ENCODE measurements at regions of chr19 and their contacts with region 1.

Region 1: DNA sequence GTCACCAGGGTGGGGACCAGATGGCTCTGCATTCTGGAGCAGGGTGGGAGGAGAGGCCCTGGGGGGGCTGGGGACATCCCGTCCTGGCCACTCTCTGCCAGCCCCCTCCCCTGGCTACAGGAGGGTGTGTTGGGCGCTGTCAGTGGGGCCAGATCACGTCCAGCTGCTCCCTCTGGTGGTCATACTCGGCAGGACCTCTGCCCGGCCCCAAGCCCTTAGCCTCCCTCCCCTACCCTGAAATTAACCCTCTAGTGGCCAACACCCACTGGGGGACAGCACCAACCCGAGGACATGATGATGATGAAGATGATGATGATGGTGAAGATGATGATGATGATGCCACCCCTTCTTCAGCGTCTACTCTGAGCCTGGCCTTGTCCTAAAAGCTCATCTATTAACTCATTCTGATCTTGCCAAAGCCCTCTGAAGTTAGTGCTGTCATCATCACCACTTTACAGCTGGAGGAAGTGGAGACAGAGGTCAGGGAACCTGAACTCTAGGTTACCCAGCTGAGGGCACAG is 590 bp upstream of the LGI4 start:
- DNase-seq: peak; percentile 81 to 99
- ATAC-seq: peak; percentile 64 to 91
- H3K4me3 ChIP-seq: no peak overlapping the region
- H3K27ac ChIP-seq: no peak overlapping the region
- H3K4me1 ChIP-seq: peaks cover 5% of the 10 kb centered on the region; the same call in 1 of the 3 replicates
- CTCF ChIP-seq: peak; percentile 95
- EP300 ChIP-seq: no peak
- POLR2A ChIP-seq: no peak
- RAD21 ChIP-seq: peak; percentile 76 to 86

Region 2: GRCh38 chr19:34639491-34640085 is 495.9 kb before region 1 on chr19:
- CTCF ChIA-PET with region 1: interaction called, 11 read pairs
- POLR2A ChIA-PET with region 1: no interaction called
- DNase-seq: peak; percentile 36 to 88
- ATAC-seq: peak; percentile 74 to 93; a peak in 5 of 6 replicates
- H3K4me3 ChIP-seq: no peak overlapping the region
- H3K27ac ChIP-seq: no peak overlapping the region
- H3K4me1 ChIP-seq: no peaks in the 10 kb centered on the region
- CTCF ChIP-seq: peak; percentile 93
- EP300 ChIP-seq: no peak
- POLR2A ChIP-seq: no peak
- RAD21 ChIP-seq: peak; percentile 87 to 95

Region 3: DNA sequence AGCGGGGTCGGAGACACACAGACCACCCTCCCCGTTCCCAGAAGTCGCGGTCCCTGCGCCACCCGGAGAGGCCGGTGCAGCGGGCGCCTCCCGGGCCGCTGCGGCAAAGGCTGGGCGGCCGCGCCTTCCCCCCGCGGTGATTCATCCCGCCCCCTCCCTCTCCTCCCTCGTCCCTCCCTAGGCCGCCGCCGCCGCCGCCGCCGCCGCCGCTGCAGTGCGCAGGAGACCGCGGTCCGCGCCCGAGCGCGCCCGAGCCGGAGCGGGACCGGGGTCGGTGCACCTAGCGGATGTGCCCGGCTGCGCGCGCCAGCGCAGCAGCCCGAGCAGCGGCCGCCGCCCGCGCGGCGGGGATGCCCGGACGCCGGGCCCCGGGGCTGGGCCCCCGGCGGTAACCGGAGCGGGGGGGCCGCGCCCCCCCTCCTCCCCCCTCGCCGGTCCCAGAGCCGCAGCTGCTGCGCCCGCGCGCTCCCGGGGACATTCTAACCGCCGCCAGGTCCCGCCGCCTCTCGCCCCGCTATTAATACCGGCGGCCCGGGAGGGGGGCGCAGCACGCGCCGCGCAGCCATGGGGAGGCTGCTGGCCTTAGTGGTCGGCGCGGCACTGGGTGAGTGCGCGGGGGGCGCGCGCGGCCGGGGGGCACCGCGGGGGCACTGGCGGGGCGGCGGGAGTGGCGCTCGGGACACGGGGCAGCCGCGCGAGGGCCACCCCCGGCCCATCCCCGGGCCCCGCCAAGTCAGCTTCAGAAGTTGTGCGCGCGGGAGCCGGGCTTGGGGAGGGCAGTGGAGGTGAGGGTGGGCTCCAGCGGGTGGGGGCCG is 105.0 kb before region 1 on chr19 and contains the start of gene SCN1B:
- CTCF ChIA-PET with region 1: interaction called, 11 read pairs
- POLR2A ChIA-PET with region 1: no interaction called
- DNase-seq: peak; percentile 85 to 91
- ATAC-seq: peak; percentile 54 to 82
- H3K4me3 ChIP-seq: peak within 1 kb of the TSS; percentile 73
- H3K27ac ChIP-seq: peak within 1 kb of the TSS; percentile 77 to 91
- H3K4me1 ChIP-seq: peaks cover 12% of the 10 kb centered on the region
- CTCF ChIP-seq: no peak; the same call in 1 of the 3 replicates
- EP300 ChIP-seq: no peak
- POLR2A ChIP-seq: no peak
- RAD21 ChIP-seq: no peak
- polyA plus RNA-seq, gene SCN1B: 11.0 and 12.8 TPM in 2 replicates

Region 4: GRCh38 chr19:35080613-35081170 is 54.8 kb before region 1 on chr19:
- CTCF ChIA-PET with region 1: interaction called, 33 read pairs
- POLR2A ChIA-PET with region 1: no interaction called
- DNase-seq: no peak
- ATAC-seq: no peak
- H3K4me3 ChIP-seq: no peak overlapping the region
- H3K27ac ChIP-seq: no peak overlapping the region
- H3K4me1 ChIP-seq: no peaks in the 10 kb centered on the region
- CTCF ChIP-seq: no peak
- EP300 ChIP-seq: no peak
- POLR2A ChIP-seq: no peak
- RAD21 ChIP-seq: no peak; a peak in 1 of 5 replicates

Region 5: DNA sequence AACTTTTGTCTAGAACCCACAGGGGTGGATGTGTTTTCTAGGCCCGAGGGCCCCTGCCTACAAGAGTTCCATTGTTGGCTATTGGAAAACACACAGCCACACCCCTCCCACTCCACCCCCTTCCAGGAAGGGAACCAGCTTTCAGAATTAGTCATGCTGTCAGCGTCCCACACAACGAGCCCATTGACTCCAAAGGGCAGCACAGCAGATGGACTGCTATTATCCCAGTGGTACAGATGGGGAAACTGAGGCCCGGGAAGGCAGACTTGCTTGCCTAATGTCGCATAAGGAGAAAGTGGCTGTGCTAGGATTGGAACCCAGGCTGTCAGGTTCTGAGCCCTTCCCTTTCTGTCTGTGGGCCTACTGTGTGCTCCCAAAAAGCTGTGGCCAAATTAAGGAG is 27.9 kb before region 1 on chr19:
- CTCF ChIA-PET with region 1: interaction called, 21 read pairs
- POLR2A ChIA-PET with region 1: no interaction called
- DNase-seq: peak in 1 of 2 experiments; percentile 55
- ATAC-seq: no peak
- H3K4me3 ChIP-seq: no peak overlapping the region
- H3K27ac ChIP-seq: no peak overlapping the region
- H3K4me1 ChIP-seq: peaks cover 6% of the 10 kb centered on the region; the same call in 1 of the 3 replicates
- CTCF ChIP-seq: no peak
- EP300 ChIP-seq: no peak
- POLR2A ChIP-seq: no peak
- RAD21 ChIP-seq: no peak

Region 6: DNA sequence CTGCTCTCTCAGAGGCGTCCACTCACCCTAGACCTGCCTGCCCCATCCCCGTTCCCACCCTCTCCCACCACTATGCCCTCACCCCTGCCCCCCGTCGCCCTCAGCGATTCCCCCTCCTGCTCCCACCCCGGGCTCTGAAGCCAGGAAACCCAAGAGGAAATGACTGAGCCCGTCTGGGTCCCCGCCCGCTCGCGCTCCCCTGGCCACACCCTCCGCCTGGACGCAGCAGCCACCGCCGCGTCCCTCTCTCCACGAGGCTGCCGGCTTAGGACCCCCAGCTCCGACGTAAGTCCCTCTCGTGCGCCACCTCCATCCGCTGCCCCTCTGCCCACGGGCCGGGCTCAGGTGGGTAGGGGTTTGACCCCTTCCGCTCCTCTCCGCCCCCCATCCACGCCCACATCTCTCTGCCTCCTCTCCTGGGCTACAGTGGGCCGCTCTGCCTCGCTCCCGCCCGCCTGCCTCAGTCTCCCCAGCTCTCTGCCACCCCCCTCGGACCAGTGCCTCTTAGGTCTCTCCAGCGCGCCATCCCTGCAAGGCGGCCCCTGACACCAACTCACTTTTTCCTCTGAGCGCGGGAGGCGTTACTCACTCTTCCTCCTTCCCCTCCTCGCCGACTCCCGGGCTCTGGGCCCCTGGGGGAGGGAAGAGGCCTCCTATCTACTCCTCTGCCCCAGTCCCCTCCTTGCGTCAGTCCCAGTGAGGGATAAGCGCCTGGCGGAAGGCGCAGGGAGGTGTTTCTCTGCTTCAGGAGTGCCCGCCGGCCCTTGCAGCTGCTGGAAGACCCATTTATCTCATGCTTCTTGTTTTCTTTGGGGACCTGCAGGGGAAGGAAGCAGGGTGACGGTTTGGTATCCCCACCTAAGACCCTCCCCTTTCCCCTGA is 19.3 kb after region 1 on chr19 and contains the start of gene FXYD5:
- CTCF ChIA-PET with region 1: interaction called, 82 read pairs
- POLR2A ChIA-PET with region 1: no interaction called
- DNase-seq: peak; percentile 76 to 96
- ATAC-seq: peak; percentile 74 to 88
- H3K4me3 ChIP-seq: peak within 1 kb of the TSS; percentile 68
- H3K27ac ChIP-seq: peak within 1 kb of the TSS; percentile 79 to 90
- H3K4me1 ChIP-seq: peaks cover 9% of the 10 kb centered on the region; the same call in 1 of the 3 replicates
- CTCF ChIP-seq: no peak
- EP300 ChIP-seq: no peak
- POLR2A ChIP-seq: peak; percentile 69
- RAD21 ChIP-seq: no peak
- polyA plus RNA-seq, gene FXYD5: 70.8 and 77.3 TPM in 2 replicates

Region 7: GRCh38 chr19:35306473-35307246 is 171.2 kb after region 1 on chr19:
- CTCF ChIA-PET with region 1: no interaction called
- POLR2A ChIA-PET with region 1: no interaction called
- DNase-seq: peak in 1 of 2 experiments; percentile 75
- ATAC-seq: peak; percentile 40 to 67; a peak in 4 of 6 replicates
- H3K4me3 ChIP-seq: no peak overlapping the region
- H3K27ac ChIP-seq: no peak overlapping the region
- H3K4me1 ChIP-seq: 0 out of 3 replicates have a peak, but pooled peaks cover 2% of the 10 kb centered on the region
- CTCF ChIP-seq: peak; percentile 33; the same call in 2 of the 3 replicates
- EP300 ChIP-seq: no peak
- POLR2A ChIP-seq: no peak
- RAD21 ChIP-seq: 0 out of 5 replicates have a peak, but pooled peaks of 1 of the 2 experiments have one; percentile 16

Region 8: GRCh38 chr19:35318650-35319448 is 183.4 kb after region 1 on chr19:
- CTCF ChIA-PET with region 1: no interaction called
- POLR2A ChIA-PET with region 1: no interaction called
- DNase-seq: peak; percentile 84
- ATAC-seq: peak; percentile 70 to 83
- H3K4me3 ChIP-seq: no peak overlapping the region
- H3K27ac ChIP-seq: peak overlapping the region; percentile 55 to 70; a peak in 5 of 6 replicates
- H3K4me1 ChIP-seq: peaks cover 16% of the 10 kb centered on the region
- CTCF ChIP-seq: no peak
- EP300 ChIP-seq: no peak
- POLR2A ChIP-seq: no peak
- RAD21 ChIP-seq: no peak